ENCODE measurements at regions of chr3 and their contacts with region 1.

Region 1: GRCh38 chr3:43863966-43864933 is 173.5 kb downstream of the ABHD5 start:
- DNase-seq: no peak
- H3K4me3 ChIP-seq: no peak overlapping the region
- H3K27ac ChIP-seq: no peak overlapping the region
- H3K4me1 ChIP-seq: peaks cover 37% of the 10 kb centered on the region
- H3K27me3 ChIP-seq: no peaks in the 10 kb centered on the region
- CTCF ChIP-seq: no peak

Region 2: DNA sequence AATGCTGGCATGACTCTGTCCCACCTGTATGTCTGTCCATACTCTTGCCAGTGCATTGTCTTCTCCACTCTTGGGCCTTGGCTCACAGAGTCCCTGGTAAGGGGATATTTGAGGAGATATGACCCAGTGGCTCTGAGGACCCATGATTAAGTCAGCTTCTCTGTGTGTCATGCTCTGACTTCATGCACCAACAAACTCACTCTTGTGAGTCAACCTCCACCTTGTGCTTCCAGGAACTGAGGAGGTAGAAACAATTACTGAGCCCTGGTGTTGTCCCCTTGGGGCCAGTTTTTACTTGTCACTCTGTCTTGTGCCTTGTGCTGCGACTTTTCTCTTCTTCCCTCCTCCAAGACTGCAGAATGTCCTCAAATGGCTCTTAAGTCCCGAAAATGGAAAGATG is 46.4 kb before region 1 on chr3:
- CTCF ChIA-PET with region 1: no interaction called
- dilution Hi-C with region 1: loop called (anchors 5 kb)
- in situ Hi-C with region 1: no loop called
- intact Hi-C with region 1: no loop called
- DNase-seq: peak; percentile 44
- H3K4me3 ChIP-seq: no peak overlapping the region
- H3K27ac ChIP-seq: no peak overlapping the region
- H3K4me1 ChIP-seq: no peaks in the 10 kb centered on the region
- H3K27me3 ChIP-seq: no peaks in the 10 kb centered on the region
- CTCF ChIP-seq: no peak